Heart left ventricle (tissue), 16 donors: ENCODE measurements at regions of chr9 and their contacts with region 1.

Region 1: GRCh38 chr9:132169672-132170392 is 8.0 kb downstream of the NTNG2 start:
- DNase-seq: peak; percentile 32 to 80 (median 64)
- ATAC-seq: peak; percentile 49 to 71 (median 64)
- H3K4me3 ChIP-seq: no peak overlapping the region
- H3K27ac ChIP-seq: no peak overlapping the region
- H3K4me1 ChIP-seq: peaks cover 0 to 6% (median 4%) of the 10 kb centered on the region in 12 donors
- H3K27me3 ChIP-seq: peaks cover 1 to 29% (median 10%) of the 10 kb centered on the region in 9 donors
- CTCF ChIP-seq: peak; percentile 67 to 89 (median 81)
- POLR2A ChIP-seq: no peak

Region 2: DNA sequence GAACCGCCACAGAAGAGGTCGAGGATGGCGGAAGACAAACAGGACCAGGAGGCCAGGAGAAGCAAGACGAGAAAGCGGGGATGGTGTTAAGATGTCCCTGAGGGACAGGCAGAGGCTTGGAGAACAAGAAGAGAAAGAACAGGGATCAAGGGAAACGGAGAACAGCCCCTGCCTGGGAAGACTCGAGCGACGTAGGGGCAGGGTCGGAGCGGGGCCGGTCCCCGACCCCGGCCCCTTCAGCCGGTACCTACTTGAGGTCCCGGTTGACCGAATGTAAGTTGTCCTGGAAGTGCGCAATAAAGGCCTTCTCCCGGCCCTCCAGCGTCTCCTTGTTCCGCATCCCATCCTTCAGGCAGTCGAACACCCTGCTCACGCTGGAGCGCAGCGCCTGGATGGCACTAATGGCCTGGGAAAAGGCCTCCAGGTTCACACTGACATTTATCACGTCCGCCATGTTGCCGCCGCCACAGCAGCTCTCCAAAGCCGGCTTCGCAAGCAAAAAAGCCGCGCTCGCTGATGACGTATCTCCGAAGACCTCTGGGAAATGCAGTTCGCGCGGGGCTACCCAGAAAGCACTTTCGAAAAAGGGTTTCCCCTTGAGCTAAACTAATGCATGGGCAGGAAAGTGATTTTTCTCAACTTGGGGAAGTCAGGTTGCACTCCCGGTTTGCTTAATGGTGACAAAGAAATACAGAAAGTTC is 90.3 kb before region 1 on chr9 and contains the start of gene MED27:
- intact Hi-C with region 1: loop called in 1 of 10 experiments (anchors 10 kb)
- DNase-seq: peak; percentile 91 to 95 (median 93)
- ATAC-seq: peak; percentile 92 to 99 (median 98)
- H3K4me3 ChIP-seq: peak within 1 kb of the TSS; percentile 40 to 96 (median 76)
- H3K27ac ChIP-seq: peak within 1 kb of the TSS; percentile 1 to 80 (median 68)
- H3K4me1 ChIP-seq: peaks cover 0 to 30% (median 17%) of the 10 kb centered on the region in 12 donors
- H3K27me3 ChIP-seq: no peaks in the 10 kb centered on the region
- CTCF ChIP-seq: no peak
- POLR2A ChIP-seq: no peak
- total RNA-seq, gene MED27: 14.3 to 20.5 (median 15.6) TPM

Region 3: DNA sequence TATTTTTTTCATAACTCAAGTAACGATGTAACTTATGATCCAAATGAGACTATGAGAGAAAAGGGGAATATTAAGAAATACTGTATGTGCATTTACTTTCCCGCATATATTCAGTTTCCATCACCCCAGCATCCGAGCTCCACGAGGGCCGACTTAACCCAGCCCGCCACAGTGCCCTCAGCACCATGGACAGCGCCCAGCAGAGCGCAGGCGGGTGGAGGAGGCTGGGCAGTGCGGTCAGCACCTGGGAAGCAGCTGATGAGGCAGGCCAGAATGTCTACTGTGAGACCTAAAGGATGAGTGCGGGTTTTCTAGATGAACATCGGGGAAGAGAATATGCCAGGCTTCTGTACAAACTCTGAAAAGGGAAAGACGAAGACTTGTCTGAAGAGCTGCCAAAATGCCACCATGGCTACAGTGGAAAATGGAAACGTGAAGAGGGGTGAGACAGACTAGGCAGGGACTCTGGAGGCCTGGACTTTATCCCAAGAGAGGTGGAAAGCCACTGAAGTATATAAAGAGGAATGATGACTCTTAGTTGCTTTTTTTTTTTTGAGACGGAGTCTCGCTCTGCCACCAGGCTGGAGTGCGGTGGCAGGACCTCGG is 55.6 kb before region 1 on chr9:
- intact Hi-C with region 1: no loop called
- DNase-seq: peak; percentile 52 to 77 (median 58)
- ATAC-seq: peak; percentile 73 to 92 (median 88)
- H3K4me3 ChIP-seq: no peak overlapping the region
- H3K27ac ChIP-seq: no peak overlapping the region
- H3K4me1 ChIP-seq: no peaks in the 10 kb centered on the region
- H3K27me3 ChIP-seq: peaks cover 0 to 14% (median 0%) of the 10 kb centered on the region in 9 donors
- CTCF ChIP-seq: no peak
- POLR2A ChIP-seq: no peak

Region 4: DNA sequence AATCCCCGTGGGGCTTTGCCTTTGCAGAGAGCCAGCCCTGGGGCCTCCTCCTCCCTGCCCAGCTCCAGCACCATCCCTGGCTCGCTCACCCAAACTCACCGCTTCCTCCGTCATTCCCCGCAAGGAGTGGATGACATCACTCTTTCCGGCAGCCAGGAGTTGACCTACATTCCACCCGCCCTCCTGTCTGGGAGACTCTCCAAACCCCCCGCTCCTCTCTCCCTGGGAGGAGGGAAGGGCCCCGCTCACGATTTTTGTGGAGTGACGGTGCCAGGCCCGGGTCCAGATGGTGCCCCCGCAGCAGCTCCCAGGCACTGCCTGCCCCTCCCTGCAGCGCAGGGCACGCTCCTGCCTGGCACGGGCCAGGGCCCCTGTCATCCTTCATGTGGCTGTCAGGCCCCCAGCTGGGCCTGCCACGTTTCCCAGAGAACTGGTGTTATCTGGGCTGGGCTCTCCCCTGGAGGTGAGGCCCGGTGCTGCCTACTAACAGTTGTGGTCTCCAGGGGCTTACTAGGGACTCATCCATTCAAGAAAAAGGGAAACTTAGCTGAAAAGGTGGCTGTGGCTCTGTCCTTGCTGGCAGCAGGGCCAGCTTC is 44.3 kb after region 1 on chr9:
- intact Hi-C with region 1: loop called in 1 of 10 experiments (anchors 1 kb)
- DNase-seq: peak; percentile 84 to 95 (median 88)
- ATAC-seq: peak; percentile 94 to 98 (median 96)
- H3K4me3 ChIP-seq: no peak overlapping the region
- H3K27ac ChIP-seq: peak overlapping the region in 11 of 12 donors; percentile 58 to 85 (median 75)
- H3K4me1 ChIP-seq: peaks cover 0 to 24% (median 11%) of the 10 kb centered on the region in 12 donors
- H3K27me3 ChIP-seq: no peaks in the 10 kb centered on the region
- CTCF ChIP-seq: peak in 7 of 12 donors; percentile 5 to 33 (median 27)
- POLR2A ChIP-seq: no peak

Region 5: DNA sequence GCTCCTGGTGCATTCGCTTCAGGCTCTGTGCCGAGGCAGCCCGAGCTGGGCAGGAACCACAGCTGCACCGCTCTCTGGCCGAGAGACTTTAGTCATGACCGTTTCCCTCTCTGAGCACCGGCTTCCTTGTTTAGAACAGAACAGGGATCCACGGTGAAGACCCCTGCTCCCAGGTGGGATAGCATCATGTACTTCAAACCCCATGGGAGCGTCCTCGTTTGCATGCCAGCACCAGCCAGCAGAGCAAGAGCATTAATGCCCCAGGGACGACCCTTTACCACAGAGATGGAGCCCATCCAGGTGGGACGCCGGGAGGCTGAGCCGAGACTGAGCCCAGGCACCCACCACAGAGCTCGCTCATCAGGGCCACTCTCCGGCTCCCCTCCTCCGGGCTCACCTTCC is 1001.7 kb after region 1 on chr9:
- intact Hi-C with region 1: no loop called
- DNase-seq: no peak
- ATAC-seq: no peak
- H3K4me3 ChIP-seq: no peak overlapping the region
- H3K27ac ChIP-seq: no peak overlapping the region
- H3K4me1 ChIP-seq: no peaks in the 10 kb centered on the region
- H3K27me3 ChIP-seq: peaks cover 0 to 4% (median 0%) of the 10 kb centered on the region in 9 donors
- CTCF ChIP-seq: no peak
- POLR2A ChIP-seq: no peak